ENCODE measurements at regions of chr1 and their contacts with region 1.

Region 1: DNA sequence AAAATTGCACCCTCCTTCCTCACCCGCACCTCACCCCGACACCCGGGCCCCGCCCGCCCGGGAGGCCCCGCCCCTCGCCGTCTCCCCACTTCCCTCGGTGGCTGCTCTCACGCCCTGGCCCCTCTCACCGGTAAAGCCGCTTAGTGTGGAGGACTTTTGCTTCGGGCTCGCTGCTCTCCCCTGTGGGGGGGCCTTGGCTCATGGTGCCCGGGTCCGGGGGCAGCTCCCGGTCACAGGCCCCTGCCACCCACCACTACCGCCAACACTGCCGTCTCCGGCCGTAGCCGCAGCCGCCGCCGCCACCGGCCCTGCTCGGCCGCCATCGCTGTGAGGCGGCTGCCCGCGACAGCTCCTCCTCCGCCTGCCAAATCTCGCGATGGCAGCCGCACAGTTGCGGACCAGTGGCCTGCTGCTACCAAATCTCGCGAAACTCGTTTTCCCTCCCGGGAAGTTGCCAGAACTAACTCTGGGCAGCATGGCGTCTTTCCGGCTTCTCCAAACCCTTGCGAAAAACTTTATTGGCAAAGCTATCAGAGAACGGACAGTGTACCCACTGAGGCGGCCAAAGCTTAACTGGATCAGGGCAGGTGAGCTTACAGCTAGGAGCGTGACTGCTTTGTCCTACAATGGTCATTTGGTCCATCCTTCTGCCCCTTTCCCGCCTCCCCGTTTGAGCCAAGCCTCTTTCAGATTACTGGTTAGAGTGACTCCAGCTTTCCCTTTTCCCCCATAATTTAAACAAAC is at the start of gene SMG5:
- DNase-seq: peak; percentile 95
- ATAC-seq: peak; percentile 91
- H3K4me3 Mint-ChIP-seq: peak within 1 kb of the TSS; percentile 94
- H3K27ac Mint-ChIP-seq: peak within 1 kb of the TSS; percentile 95
- H3K4me1 Mint-ChIP-seq: peaks cover 27% of the 10 kb centered on the region
- H3K27me3 Mint-ChIP-seq: no peaks in the 10 kb centered on the region
- total RNA-seq, gene SMG5: 72.3 to 76.4 TPM

Region 2: GRCh38 chr1:156146020-156146768 is 136.5 kb before region 1 on chr1:
- POLR2A ChIA-PET with region 1: interaction called, 10 read pairs
- DNase-seq: peak; percentile 49
- ATAC-seq: peak; percentile 82
- H3K4me3 Mint-ChIP-seq: peak overlapping the region; percentile 83
- H3K27ac Mint-ChIP-seq: peak overlapping the region; percentile 89
- H3K4me1 Mint-ChIP-seq: peaks cover 33% of the 10 kb centered on the region
- H3K27me3 Mint-ChIP-seq: peaks cover 2% of the 10 kb centered on the region

Region 3: DNA sequence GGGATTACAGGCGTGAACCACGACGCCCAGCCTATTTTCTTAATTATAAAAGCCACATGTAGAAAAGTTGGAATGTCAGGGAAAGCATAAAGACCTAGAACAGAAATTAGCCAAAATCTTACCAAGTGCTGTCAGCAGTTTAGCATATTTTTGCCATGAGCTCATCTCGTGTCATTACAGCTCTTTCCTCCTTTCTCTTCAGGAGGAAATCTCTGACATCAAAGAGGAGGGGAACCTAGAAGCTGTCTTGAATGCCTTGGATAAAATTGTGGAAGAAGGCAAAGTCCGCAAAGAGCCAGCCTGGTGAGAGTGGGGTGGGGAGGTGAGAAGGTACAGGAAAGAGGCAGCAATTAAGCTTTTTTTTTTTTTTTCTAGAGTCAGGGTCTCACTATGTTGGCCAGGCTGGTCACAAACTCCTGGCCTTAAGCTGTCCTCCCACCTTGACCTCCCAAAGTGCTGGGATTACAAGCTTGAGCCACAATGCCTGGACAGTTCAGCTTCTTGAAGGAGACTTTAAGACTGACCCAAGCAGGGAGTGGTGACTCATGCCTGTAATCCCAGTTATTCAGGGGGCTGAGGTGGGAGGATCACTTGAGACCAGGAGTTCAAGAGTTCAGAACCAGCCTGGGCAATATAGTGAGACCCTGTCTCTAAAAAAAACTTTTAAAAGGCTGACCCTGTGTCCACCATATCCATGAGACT is 49.1 kb before region 1 on chr1:
- POLR2A ChIA-PET with region 1: no interaction called
- DNase-seq: no peak
- ATAC-seq: no peak
- H3K4me3 Mint-ChIP-seq: no peak overlapping the region
- H3K27ac Mint-ChIP-seq: no peak overlapping the region
- H3K4me1 Mint-ChIP-seq: peaks cover 3% of the 10 kb centered on the region
- H3K27me3 Mint-ChIP-seq: no peaks in the 10 kb centered on the region

Region 4: GRCh38 chr1:156245451-156246232 is 37.0 kb before region 1 on chr1:
- POLR2A ChIA-PET with region 1: interaction called, 15 read pairs
- DNase-seq: peak; percentile 70
- ATAC-seq: peak; percentile 78
- H3K4me3 Mint-ChIP-seq: peak overlapping the region; percentile 86
- H3K27ac Mint-ChIP-seq: peak overlapping the region; percentile 95
- H3K4me1 Mint-ChIP-seq: peaks cover 23% of the 10 kb centered on the region
- H3K27me3 Mint-ChIP-seq: no peaks in the 10 kb centered on the region

Region 5: DNA sequence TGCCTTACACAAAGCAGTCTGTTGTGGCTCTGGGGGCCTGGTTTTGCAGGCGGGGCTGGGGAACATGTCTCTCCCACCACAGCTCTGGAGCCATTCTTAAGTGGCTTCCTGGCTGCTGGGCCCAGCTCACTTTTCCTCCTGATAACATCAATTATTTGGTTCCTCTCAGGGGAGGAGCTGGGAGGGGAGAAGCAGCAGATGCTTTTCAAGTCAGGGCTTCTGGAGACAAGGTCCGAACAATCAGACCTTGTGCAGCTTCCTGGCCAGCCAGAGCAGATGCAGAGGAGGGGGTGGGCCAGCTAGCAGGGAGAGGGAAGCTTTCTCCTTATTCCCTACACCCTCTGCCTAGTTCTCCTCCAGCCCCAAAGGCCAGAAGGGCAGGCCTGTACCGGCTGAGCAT is 31.1 kb before region 1 on chr1:
- POLR2A ChIA-PET with region 1: interaction called, 15 read pairs
- DNase-seq: no peak
- ATAC-seq: peak; percentile 46
- H3K4me3 Mint-ChIP-seq: peak overlapping the region; percentile 30
- H3K27ac Mint-ChIP-seq: peak overlapping the region; percentile 76
- H3K4me1 Mint-ChIP-seq: peaks cover 26% of the 10 kb centered on the region
- H3K27me3 Mint-ChIP-seq: no peaks in the 10 kb centered on the region

Region 6: GRCh38 chr1:156270314-156270713 is 12.3 kb before region 1 on chr1:
- POLR2A ChIA-PET with region 1: interaction called, 24 read pairs
- DNase-seq: no peak
- ATAC-seq: no peak
- H3K4me3 Mint-ChIP-seq: no peak overlapping the region
- H3K27ac Mint-ChIP-seq: no peak overlapping the region
- H3K4me1 Mint-ChIP-seq: peaks cover 3% of the 10 kb centered on the region
- H3K27me3 Mint-ChIP-seq: no peaks in the 10 kb centered on the region

Region 7: DNA sequence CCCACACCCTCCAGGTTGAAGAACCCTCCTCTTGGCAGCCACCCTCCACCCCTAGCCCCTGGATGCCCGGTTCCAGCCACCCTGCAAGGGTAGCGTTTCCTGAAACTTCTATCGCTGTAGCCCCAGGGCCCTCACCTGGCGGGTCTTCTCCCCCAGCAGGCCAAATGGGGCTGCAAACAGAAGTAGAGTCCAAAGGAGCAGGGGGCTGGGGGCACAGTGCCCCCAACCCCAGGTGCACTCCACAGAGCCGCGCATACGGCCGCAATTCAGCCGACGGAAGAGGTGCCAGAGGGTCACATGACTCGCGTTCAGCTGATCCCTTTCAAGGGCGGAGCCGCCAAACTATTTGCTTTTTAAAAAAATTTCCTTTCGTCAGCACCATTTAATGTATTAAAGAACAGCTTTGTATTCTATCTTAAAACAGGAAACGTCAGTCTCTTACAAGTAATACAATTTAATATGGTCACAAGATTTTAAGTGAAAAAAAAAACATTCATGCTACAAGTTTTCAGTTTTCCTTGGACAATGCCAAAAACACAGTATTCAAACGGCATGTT is 12.8 kb after region 1 on chr1 and contains the start of gene GLMP:
- POLR2A ChIA-PET with region 1: interaction called, 22 read pairs
- DNase-seq: peak; percentile 68
- ATAC-seq: peak; percentile 82
- H3K4me3 Mint-ChIP-seq: peak within 1 kb of the TSS; percentile 93
- H3K27ac Mint-ChIP-seq: peak within 1 kb of the TSS; percentile 86
- H3K4me1 Mint-ChIP-seq: peaks cover 10% of the 10 kb centered on the region
- H3K27me3 Mint-ChIP-seq: no peaks in the 10 kb centered on the region
- total RNA-seq, gene GLMP: 27.5 to 27.8 TPM

Region 8: GRCh38 chr1:156338180-156338973 is 55.7 kb after region 1 on chr1 and contains the starts of genes CCT3 and TSACC:
- POLR2A ChIA-PET with region 1: no interaction called
- DNase-seq: peak; percentile 99
- ATAC-seq: peak; percentile 93
- H3K4me3 Mint-ChIP-seq: peak within 1 kb of the TSS; percentile 98
- H3K27ac Mint-ChIP-seq: peak within 1 kb of the TSS; percentile 96
- H3K4me1 Mint-ChIP-seq: peaks cover 29% of the 10 kb centered on the region
- H3K27me3 Mint-ChIP-seq: no peaks in the 10 kb centered on the region
- total RNA-seq, gene CCT3: 163 to 165 TPM
- total RNA-seq, gene TSACC: not detected